ENCODE measurements at regions of chr11 and their contacts with region 1.

Region 1: GRCh38 chr11:3841426-3842350 is 929 bp upstream of the RHOG start:
- DNase-seq: peak; percentile 90
- H3K4me3 ChIP-seq: peak overlapping the region; percentile 81
- H3K27ac ChIP-seq: peak overlapping the region; percentile 82
- H3K4me1 ChIP-seq: peaks cover 39% of the 10 kb centered on the region
- CTCF ChIP-seq: peak; percentile 91

Region 2: GRCh38 chr11:3091791-3092602 is 749.7 kb before region 1 on chr11:
- CTCF ChIA-PET with region 1: no interaction called
- POLR2A ChIA-PET with region 1: no interaction called
- intact Hi-C with region 1: no loop called
- DNase-seq: peak; percentile 61
- H3K4me3 ChIP-seq: no peak overlapping the region
- H3K27ac ChIP-seq: no peak overlapping the region
- H3K4me1 ChIP-seq: no peaks in the 10 kb centered on the region
- CTCF ChIP-seq: peak; percentile 89

Region 3: DNA sequence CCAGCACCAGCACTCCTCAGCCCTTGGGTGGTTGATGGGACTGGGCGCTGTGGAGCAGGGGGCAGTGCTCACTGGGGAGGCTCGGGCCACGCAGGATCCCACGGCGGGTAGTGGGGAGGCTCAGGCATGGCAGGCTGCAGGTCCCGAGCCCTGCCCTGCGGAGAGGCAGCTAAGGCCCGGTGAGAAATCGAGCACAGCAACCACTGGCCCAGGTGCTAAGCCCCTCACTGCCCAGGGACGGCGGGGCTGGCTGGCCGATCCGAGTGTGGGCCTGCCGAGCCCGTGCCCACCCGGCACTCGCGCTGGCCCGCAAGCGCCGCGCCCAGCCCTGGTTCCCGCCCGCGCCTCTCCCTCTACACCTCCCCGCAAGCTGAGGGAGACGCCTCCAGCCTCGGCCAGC is 406.7 kb before region 1 on chr11:
- CTCF ChIA-PET with region 1: no interaction called
- POLR2A ChIA-PET with region 1: no interaction called
- intact Hi-C with region 1: no loop called
- DNase-seq: no peak
- H3K4me3 ChIP-seq: no peak overlapping the region
- H3K27ac ChIP-seq: no peak overlapping the region
- H3K4me1 ChIP-seq: no peaks in the 10 kb centered on the region
- CTCF ChIP-seq: no peak

Region 4: GRCh38 chr11:3723014-3723708 is 118.5 kb before region 1 on chr11:
- CTCF ChIA-PET with region 1: no interaction called
- POLR2A ChIA-PET with region 1: no interaction called
- intact Hi-C with region 1: no loop called
- DNase-seq: no peak
- H3K4me3 ChIP-seq: no peak overlapping the region
- H3K27ac ChIP-seq: no peak overlapping the region
- H3K4me1 ChIP-seq: no peaks in the 10 kb centered on the region
- CTCF ChIP-seq: no peak

Region 5: GRCh38 chr11:3786781-3787428 is 54.8 kb before region 1 on chr11:
- CTCF ChIA-PET with region 1: interaction called, 15 read pairs
- POLR2A ChIA-PET with region 1: interaction called, 3 read pairs
- intact Hi-C with region 1: no loop called
- DNase-seq: no peak
- H3K4me3 ChIP-seq: no peak overlapping the region
- H3K27ac ChIP-seq: no peak overlapping the region
- H3K4me1 ChIP-seq: no peaks in the 10 kb centered on the region
- CTCF ChIP-seq: no peak

Region 6: DNA sequence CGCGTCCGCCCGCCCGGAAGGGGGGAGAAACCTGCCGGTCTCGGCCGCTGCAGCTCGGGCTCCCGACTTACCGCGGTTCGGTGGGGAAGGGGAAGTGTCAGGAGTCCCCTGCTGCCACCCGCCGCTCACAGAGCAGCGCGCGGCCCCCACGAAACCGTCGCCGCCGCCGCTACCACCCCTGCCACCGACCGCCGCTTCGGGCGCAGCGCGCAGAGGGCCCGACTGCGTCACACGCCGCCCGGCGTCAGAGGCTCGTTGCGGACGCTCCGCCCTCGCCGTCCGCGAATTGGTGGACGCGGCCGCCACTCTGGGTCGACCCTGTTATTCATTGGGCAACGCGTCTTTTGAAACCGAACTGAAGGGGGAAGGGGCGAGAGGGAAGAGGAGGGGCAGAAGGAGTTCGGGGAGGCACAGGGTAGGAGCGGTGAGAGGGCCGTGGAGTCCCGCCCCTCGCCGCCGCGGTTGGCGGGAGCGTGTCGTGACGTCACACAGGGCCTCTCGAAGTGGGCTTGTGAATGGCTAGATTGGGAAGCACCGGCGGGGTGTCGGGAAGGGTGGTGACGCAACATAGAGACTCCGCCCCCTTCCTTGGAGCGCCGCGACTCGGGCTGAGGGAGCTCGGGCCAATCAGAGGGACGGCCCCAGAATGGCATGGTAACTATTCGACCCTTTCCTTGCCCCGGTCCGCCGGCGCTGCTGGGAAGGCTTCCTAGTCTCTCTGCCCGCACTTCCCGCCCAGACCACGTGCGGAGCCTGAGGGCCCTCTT is 44.2 kb before region 1 on chr11 and contains the start of gene NUP98:
- CTCF ChIA-PET with region 1: interaction called, 3 read pairs
- POLR2A ChIA-PET with region 1: interaction called, 7 read pairs
- intact Hi-C with region 1: loop called (anchors 1 kb)
- DNase-seq: peak; percentile 100
- H3K4me3 ChIP-seq: peak within 1 kb of the TSS; percentile 93
- H3K27ac ChIP-seq: peak within 1 kb of the TSS; percentile 73
- H3K4me1 ChIP-seq: peaks cover 29% of the 10 kb centered on the region
- CTCF ChIP-seq: peak; percentile 4; the same call in 1 of the 2 replicates
- total RNA-seq, gene NUP98: 83.9 and 102 TPM in 2 replicates

Region 7: GRCh38 chr11:3824714-3825472 is 16.8 kb before region 1 on chr11:
- CTCF ChIA-PET with region 1: interaction called, 4 read pairs
- POLR2A ChIA-PET with region 1: interaction called, 3 read pairs
- intact Hi-C with region 1: loop called (anchors 1 kb)
- DNase-seq: peak; percentile 74
- H3K4me3 ChIP-seq: no peak overlapping the region
- H3K27ac ChIP-seq: no peak overlapping the region
- H3K4me1 ChIP-seq: no peaks in the 10 kb centered on the region
- CTCF ChIP-seq: peak; percentile 86

Region 8: GRCh38 chr11:3947061-3947460 is 105.4 kb after region 1 on chr11:
- CTCF ChIA-PET with region 1: interaction called, 4 read pairs
- POLR2A ChIA-PET with region 1: interaction called, 12 read pairs
- intact Hi-C with region 1: no loop called
- DNase-seq: peak; percentile 88
- H3K4me3 ChIP-seq: peak overlapping the region; percentile 52
- H3K27ac ChIP-seq: peak overlapping the region; percentile 96
- H3K4me1 ChIP-seq: peaks cover 74% of the 10 kb centered on the region
- CTCF ChIP-seq: no peak

Measured in OCI-LY7 (cell line).